ENCODE measurements at regions of chr18 and their contacts with region 1.

Region 1: GRCh38 chr18:59566533-59566971 is 130.7 kb downstream of the CCBE1 start:
- DNase-seq: no peak
- H3K4me3 Mint-ChIP-seq: no peak overlapping the region
- H3K27ac Mint-ChIP-seq: no peak overlapping the region
- H3K4me1 Mint-ChIP-seq: no peaks in the 10 kb centered on the region
- H3K27me3 Mint-ChIP-seq: no peaks in the 10 kb centered on the region

Region 2: DNA sequence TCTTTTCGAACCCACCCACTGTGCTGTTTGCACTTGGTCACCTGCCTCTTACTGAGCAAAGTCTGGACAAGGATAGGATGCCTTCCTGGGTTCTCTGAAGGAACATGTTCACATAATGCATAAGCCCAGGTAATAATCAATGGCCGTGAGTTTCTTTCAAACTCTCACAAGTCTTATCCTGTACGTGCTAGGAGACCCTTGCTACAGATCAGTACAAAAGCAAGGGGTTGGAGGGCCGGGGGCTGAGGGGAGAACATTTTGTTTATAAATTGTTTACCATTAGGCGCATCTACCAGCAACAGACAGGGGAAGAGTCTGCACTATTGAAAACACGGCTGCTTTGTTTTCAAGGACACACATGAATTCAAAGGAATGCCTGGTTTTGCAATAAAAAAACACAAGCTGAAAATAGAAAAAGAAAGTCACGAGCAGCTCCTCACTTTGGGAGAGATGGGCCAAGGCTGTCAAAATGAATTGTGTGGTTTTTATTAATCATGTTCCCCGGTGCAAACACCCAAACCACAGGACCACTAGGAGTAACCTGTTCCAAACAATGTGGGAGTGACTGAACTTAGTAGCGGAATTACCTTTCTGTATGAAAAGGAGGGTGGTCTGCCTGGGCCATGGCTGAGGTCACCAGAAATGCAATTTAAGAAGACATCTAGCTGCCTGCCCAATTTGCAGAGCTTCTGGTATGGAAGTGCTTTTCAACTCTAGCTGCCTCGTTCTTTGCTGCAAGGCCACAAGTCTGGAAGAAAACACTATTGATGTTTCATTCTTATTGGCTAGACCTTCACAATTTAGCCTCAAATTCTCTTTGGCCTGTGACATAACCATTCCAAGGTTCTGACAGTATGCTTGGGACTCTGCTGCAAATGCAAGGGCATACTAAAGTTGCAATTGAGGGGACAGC is 57.2 kb after region 1 on chr18:
- intact Hi-C with region 1: loop called (anchors 10 kb)
- DNase-seq: no peak
- H3K4me3 Mint-ChIP-seq: no peak overlapping the region
- H3K27ac Mint-ChIP-seq: no peak overlapping the region
- H3K4me1 Mint-ChIP-seq: no peaks in the 10 kb centered on the region
- H3K27me3 Mint-ChIP-seq: no peaks in the 10 kb centered on the region

Measured in activated T-helper 1 cell treated with anti-CD3 and anti-CD28 coated beads, Interleukin-12 subunit alpha, Interleukin-12 subunit beta, Interleukin-2, Interleukin-4 antibody, amounts not matched to agents 30 ng/mL and 10 ng/mL and 1 ng/mL, durations not matched to agents 14 hours and 24 hours and 36 hours (primary cell).